BJ (cell line): ENCODE measurements at regions of chr9 and their contacts with region 1.

Region 1: DNA sequence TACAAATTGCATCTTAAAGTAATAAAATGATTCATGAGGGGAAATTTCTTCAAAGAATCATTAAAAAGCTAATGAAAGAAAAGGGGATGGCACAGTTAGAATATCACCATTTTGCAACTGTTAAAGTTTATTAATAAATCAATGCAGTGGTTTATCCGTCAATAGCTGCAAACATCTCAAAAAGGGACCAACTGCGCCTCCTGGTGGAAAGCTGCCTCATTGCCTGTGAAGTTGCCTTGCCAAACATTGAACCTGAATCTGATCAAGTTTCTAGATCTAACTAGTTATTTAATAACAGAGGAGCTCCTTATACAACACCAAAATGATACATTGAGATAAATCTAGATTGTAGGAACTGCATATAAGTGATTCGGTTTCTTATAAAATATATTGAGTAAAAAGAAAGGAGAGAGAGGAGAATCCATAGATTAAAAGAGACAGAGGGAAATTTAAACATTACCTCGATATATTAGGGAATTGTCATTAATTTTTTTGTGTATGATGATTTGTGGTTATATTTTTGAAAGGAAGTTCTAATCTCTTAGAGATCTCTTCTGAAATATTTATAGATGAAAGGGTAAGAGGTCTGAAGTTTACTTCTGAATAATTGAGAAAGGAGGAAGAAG is 6.9 kb upstream of the NDUFB6 start:
- DNase-seq: no peak
- H3K4me3 ChIP-seq: no peak overlapping the region
- H3K27me3 ChIP-seq: no peaks in the 10 kb centered on the region
- CTCF ChIP-seq: peak; percentile 95

Region 2: GRCh38 chr9:32384364-32385151 is 195.3 kb before region 1 on chr9 and contains the start of gene ACO1:
- CTCF ChIA-PET with region 1: interaction called, 492 read pairs
- POLR2A ChIA-PET with region 1: no interaction called
- DNase-seq: no peak
- H3K4me3 ChIP-seq: peak within 1 kb of the TSS; percentile 87
- H3K27me3 ChIP-seq: no peaks in the 10 kb centered on the region; the same call in 1 of the 2 replicates
- CTCF ChIP-seq: peak; percentile 14; the same call in 1 of the 2 replicates
- polyA plus RNA-seq, gene ACO1: 93.8 and 111 TPM in 2 replicates

Region 3: DNA sequence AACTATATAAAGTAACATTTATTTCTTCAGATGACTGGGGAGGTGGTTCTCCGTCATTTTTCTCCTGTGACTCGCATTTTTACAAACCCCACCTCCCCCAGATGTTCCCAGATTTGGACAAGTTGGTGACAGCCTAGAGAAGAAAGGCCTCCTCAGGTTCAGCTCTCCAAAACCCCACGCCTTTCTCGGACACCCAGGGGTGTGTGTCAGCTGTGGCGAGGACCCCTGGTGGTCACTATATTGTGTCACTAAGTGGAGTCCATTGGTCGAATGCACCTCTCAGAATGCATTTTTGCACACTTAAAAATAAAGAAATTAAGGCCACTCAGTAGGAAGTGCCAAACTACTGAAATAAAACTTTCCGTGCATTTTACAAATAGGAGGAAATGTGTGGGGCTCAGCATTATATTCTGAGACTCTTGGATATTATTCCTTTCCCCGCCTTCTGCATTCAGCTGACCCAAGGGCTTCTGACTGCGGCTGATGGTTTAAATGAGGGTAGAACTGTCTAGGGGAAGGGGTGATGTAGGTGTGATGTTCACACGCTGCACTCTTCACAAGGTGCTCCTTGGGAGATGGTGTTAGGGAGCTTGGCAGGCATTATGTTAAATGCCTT is 147.8 kb before region 1 on chr9:
- CTCF ChIA-PET with region 1: interaction called, 50 read pairs
- POLR2A ChIA-PET with region 1: no interaction called
- DNase-seq: no peak
- H3K4me3 ChIP-seq: no peak overlapping the region
- H3K27me3 ChIP-seq: no peaks in the 10 kb centered on the region
- CTCF ChIP-seq: peak; percentile 64

Region 4: GRCh38 chr9:32566770-32567169 is 13.0 kb before region 1 on chr9:
- CTCF ChIA-PET with region 1: interaction called, 17 read pairs
- POLR2A ChIA-PET with region 1: no interaction called
- DNase-seq: no peak
- H3K4me3 ChIP-seq: no peak overlapping the region
- H3K27me3 ChIP-seq: no peaks in the 10 kb centered on the region
- CTCF ChIP-seq: no peak

Region 5: GRCh38 chr9:32968101-32969011 is 388.5 kb after region 1 on chr9:
- CTCF ChIA-PET with region 1: interaction called, 162 read pairs
- POLR2A ChIA-PET with region 1: no interaction called
- DNase-seq: no peak
- H3K4me3 ChIP-seq: no peak overlapping the region
- H3K27me3 ChIP-seq: no peaks in the 10 kb centered on the region
- CTCF ChIP-seq: peak; percentile 72